Left cardiac atrium (tissue), 4 donors: ENCODE measurements at regions of chr7 and their contacts with region 1.

Region 1: GRCh38 chr7:106112117-106112971 is at the start of gene SYPL1:
- DNase-seq: peak; percentile 94
- ATAC-seq: peak; percentile 95 to 97
- total RNA-seq, gene SYPL1: 71.9 to 87.1 TPM

Region 2: DNA sequence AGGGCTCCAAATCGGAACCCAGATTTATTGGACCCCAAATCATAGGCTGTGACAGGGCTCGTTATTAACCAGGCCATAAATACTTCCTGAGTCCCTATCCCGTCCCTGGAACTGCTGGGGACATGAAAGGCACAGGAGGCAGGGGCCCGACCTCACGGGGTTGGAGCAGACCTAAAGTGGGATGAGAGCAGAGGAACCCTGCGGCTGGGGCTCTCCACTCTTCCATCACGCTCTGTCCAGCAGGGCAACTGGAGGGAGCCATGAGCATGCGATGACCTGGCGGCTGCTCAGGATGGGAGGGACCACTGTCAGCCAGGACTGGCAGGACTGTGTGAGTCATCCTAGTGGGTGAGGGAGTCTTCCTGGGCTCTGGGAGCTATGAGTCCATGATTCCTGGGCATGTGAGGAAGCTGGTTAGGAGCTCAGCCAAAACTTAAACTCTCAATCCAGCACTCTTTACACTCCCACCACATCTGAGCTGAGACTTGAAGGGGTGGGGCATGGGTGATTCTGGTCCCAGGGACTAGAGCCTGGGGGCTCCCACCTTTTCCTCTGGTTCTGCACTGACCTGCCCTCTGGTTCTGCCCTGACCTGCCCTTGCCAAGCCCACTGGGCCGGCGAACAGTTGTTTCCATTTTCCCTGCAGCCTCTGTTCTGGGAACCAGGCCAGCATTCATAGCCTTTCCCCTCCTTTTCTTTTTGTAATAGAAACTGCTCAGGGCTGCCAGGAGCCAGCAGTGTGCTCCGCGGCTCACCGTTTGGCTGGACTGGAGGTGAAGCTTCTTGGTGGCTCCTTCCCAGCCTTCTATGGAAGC is 47.4 kb before region 1 on chr7:
- intact Hi-C with region 1: loop called in 1 of 2 experiments (anchors 5 kb)
- DNase-seq: peak; percentile 88
- ATAC-seq: peak; percentile 94 to 96

Region 3: GRCh38 chr7:106089647-106090046 is 22.7 kb before region 1 on chr7:
- intact Hi-C with region 1: no loop called
- DNase-seq: no peak
- ATAC-seq: no peak

Region 4: DNA sequence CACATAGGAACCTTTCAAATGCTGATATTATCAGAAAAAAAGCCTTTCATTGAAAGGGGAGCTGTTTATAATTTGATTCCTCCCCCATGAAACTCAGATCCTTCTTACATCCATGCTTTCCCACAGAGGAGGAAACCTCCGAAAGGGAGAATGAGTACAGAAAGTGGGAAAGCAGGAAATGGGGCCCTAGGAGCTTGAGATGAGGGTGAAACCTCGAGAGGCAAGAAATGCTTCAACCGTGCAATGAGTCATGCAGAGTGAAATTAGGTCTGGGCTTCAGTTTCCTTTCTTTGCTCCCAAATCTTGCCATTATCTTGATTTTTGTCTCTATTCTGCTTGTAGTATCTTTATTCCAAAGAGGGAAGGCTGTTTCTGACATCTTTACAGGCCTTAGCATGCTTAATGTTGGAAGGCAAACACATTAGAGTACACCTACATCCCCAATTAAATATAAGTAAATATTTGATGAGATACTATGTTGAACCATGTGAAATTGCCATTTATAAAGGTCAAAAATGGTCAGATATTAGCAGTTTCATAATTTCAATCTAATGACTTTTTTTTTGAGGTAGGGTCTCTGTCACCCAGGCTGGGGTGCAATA is 93.4 kb after region 1 on chr7:
- intact Hi-C with region 1: no loop called
- DNase-seq: no peak
- ATAC-seq: no peak